ENCODE measurements at regions of chr1 and their contacts with region 1.

Region 1: DNA sequence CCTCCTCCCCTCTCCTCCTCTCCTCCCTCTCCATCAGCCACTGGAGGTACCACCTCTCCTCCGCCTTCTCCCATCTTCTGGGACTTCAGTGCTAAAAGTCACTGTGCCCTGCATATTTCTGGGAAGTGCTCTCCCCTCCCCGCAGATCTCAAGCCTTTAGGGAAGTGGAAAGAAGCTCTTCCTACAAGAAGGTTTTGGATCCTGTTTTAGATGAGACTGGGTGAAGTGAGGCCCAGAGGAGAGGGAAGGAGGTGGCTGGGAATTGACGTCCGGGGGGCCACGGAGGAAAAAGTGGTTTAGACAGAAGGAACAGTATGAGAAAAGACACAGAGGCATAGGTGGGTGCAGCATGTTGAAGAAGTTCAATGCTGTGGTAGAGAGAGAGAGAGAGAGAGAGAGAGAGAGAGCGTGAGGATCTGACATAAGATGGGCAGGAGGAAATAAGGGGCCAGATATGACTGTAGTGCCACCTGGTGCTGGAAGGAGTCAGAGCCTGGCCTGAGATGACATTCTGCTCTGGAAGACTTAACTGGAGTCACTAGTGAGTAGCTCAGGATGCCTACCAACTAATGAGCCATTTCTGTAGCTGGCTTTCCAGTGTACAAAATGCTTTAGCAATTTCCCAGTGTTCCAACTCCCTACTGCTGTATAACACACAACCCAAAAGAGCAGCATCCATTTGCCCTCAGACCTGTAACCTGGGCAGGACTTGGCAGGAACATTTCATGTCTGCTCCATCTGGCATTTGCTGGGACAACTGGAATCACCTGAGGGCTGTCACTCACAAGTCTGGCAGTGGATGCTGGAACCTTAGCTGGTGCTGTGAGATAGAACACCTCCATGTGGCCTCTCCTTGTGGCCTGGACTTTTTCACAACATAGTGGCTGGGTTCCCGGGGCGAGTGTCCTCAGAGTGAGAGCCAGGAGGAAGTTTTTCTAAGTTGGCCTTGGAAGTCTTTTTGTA is 16.6 kb upstream of the ZSCAN20 start:
- DNase-seq: no peak
- ATAC-seq: peak; percentile 94
- H3K4me3 ChIP-seq: no peak overlapping the region
- H3K27ac ChIP-seq: no peak overlapping the region
- H3K4me1 ChIP-seq: peaks cover 27% of the 10 kb centered on the region
- H3K27me3 ChIP-seq: no peaks in the 10 kb centered on the region
- CTCF ChIP-seq: peak; percentile 74 to 80 (median 74)
- EP300 ChIP-seq: no peak
- POLR2A ChIP-seq: no peak
- RAD21 ChIP-seq: peak; percentile 81

Region 2: DNA sequence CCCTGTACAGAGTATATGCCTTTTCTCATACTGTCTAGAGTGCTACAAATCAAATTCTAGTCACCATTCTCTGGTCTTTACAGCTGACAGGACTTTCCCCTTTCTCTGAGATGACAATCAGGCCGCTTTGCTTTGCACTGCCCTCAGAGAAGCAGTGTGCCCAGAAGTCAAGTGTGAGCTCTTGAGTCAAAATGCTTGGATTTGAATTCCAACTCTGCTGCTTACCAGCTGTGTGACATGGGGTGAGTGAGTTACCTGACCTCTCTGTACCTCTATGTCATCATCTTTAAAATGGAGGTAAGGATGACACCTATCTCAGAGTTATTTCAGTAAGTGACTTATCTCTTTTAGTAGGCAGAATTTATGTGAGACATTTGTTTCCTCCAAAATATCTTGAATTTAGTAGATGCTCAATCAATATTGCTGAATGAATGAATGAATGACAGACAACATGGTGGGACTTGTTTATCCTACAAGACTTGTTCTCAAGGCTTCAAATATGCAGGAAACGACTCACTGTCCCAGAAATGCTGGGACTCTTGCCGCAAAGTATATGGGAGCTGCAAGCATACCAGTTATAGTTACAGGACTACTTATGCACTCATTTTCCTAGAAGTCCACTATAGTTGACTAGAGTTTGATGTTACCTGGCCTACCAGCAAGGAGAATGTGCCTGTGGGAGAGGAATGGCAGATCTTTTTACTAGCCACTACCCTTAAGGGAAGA is 96.9 kb before region 1 on chr1:
- CTCF ChIA-PET with region 1: interaction called, 12 read pairs
- POLR2A ChIA-PET with region 1: no interaction called
- RAD21 ChIA-PET with region 1: no interaction called
- SMC1A ChIA-PET with region 1: no interaction called
- in situ Hi-C with region 1: no loop called
- intact Hi-C with region 1: no loop called
- DNase-seq: no peak
- ATAC-seq: no peak
- H3K4me3 ChIP-seq: no peak overlapping the region
- H3K27ac ChIP-seq: no peak overlapping the region
- H3K4me1 ChIP-seq: no peaks in the 10 kb centered on the region
- H3K27me3 ChIP-seq: no peaks in the 10 kb centered on the region
- CTCF ChIP-seq: no peak
- EP300 ChIP-seq: no peak
- POLR2A ChIP-seq: no peak
- RAD21 ChIP-seq: no peak

Region 3: DNA sequence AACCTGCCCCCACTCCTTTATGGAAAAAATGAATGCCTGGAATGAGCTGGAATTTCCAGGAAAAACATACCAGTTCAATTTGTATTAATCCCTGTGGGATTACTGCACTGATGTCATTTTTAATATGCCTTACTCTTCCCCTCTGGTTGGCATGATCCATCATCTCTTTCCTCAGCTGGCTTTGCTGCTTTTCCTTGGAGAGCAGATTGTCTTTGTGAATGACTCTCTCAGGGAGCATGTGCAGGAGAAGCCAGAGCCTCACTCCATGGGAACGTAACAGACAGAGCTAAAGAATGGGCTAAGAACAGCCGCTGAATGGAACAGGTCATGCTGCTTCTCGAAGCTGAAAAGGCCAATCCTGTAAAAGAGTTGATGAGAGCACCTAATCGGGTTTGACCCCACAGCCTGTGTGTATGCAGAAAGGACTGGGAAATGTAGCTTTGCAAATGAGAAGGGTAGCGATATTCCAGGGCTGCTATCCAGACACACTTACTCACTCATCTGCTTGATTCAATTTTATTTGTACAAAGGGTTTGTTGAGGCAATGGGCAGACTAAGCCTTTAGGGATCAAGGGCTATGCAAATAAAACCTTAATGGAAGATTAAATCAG is 45.6 kb before region 1 on chr1:
- CTCF ChIA-PET with region 1: no interaction called
- POLR2A ChIA-PET with region 1: no interaction called
- RAD21 ChIA-PET with region 1: no interaction called
- SMC1A ChIA-PET with region 1: no interaction called
- in situ Hi-C with region 1: loop called (anchors 5 kb)
- intact Hi-C with region 1: no loop called
- DNase-seq: no peak
- ATAC-seq: no peak
- H3K4me3 ChIP-seq: no peak overlapping the region
- H3K27ac ChIP-seq: no peak overlapping the region
- H3K4me1 ChIP-seq: no peaks in the 10 kb centered on the region
- H3K27me3 ChIP-seq: peaks cover 0 to 2% of the 10 kb centered on the region in 2 experiments; a peak in 2 of 4 replicates
- CTCF ChIP-seq: no peak
- EP300 ChIP-seq: no peak
- POLR2A ChIP-seq: no peak
- RAD21 ChIP-seq: no peak